Caco-2 (cell line): ENCODE measurements at regions of chr13 and their contacts with region 1.

Region 1: GRCh38 chr13:50244713-50245574 is 229.7 kb downstream of the KCNRG start:
- DNase-seq: peak; percentile 78 to 85
- H3K4me3 ChIP-seq: no peak overlapping the region
- H3K4me3 Mint-ChIP-seq: no peak overlapping the region
- H3K27ac Mint-ChIP-seq: peak overlapping the region; percentile 78
- H3K4me1 ChIP-seq: peaks cover 24% of the 10 kb centered on the region
- H3K4me1 Mint-ChIP-seq: peaks cover 34% of the 10 kb centered on the region
- H3K27me3 ChIP-seq: no peaks in the 10 kb centered on the region
- H3K27me3 Mint-ChIP-seq: no peaks in the 10 kb centered on the region
- CTCF ChIP-seq: no peak

Region 2: GRCh38 chr13:50156140-50156539 is 88.8 kb before region 1 on chr13:
- CTCF ChIA-PET with region 1: no interaction called
- POLR2A ChIA-PET with region 1: no interaction called
- intact Hi-C with region 1: no loop called
- DNase-seq: no peak
- H3K4me3 ChIP-seq: no peak overlapping the region
- H3K4me3 Mint-ChIP-seq: no peak overlapping the region
- H3K27ac Mint-ChIP-seq: no peak overlapping the region
- H3K4me1 ChIP-seq: peaks cover 5% of the 10 kb centered on the region; the same call in 1 of the 2 replicates
- H3K4me1 Mint-ChIP-seq: peaks cover 11% of the 10 kb centered on the region
- H3K27me3 ChIP-seq: no peaks in the 10 kb centered on the region
- H3K27me3 Mint-ChIP-seq: no peaks in the 10 kb centered on the region
- CTCF ChIP-seq: no peak

Region 3: DNA sequence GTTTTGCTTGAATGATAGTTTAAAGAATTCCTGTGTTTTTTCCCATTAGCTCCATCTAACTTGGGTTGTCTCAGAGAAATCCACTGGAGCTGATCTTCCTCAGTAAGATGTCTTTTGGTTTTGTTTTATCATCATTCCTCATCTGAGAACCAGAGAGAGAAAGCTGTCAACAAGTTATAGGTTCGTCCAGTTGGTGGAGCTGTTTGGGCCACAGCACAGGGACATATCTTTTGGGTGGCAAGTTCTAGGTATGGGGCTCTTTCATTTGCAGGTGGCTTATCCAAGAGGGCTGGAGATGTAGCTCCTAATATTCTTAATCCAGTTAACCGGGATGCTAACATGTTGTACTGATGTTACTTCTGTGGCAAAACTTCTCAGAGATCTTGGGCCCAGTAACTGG is 55.5 kb before region 1 on chr13:
- CTCF ChIA-PET with region 1: no interaction called
- POLR2A ChIA-PET with region 1: no interaction called
- intact Hi-C with region 1: loop called (anchors 5 kb)
- DNase-seq: no peak
- H3K4me3 ChIP-seq: no peak overlapping the region
- H3K4me3 Mint-ChIP-seq: no peak overlapping the region
- H3K27ac Mint-ChIP-seq: no peak overlapping the region
- H3K4me1 ChIP-seq: peaks cover 19% of the 10 kb centered on the region
- H3K4me1 Mint-ChIP-seq: peaks cover 7% of the 10 kb centered on the region
- H3K27me3 ChIP-seq: no peaks in the 10 kb centered on the region
- H3K27me3 Mint-ChIP-seq: no peaks in the 10 kb centered on the region
- CTCF ChIP-seq: no peak

Region 4: GRCh38 chr13:50229960-50230661 is 14.8 kb before region 1 on chr13:
- CTCF ChIA-PET with region 1: no interaction called
- POLR2A ChIA-PET with region 1: no interaction called
- intact Hi-C with region 1: loop called (anchors 1 kb)
- DNase-seq: peak in 1 of 2 experiments; percentile 12
- H3K4me3 ChIP-seq: no peak overlapping the region
- H3K4me3 Mint-ChIP-seq: no peak overlapping the region
- H3K27ac Mint-ChIP-seq: peak overlapping the region; percentile 34
- H3K4me1 ChIP-seq: peaks cover 16% of the 10 kb centered on the region
- H3K4me1 Mint-ChIP-seq: peaks cover 12% of the 10 kb centered on the region
- H3K27me3 ChIP-seq: no peaks in the 10 kb centered on the region
- H3K27me3 Mint-ChIP-seq: no peaks in the 10 kb centered on the region
- CTCF ChIP-seq: no peak

Region 5: DNA sequence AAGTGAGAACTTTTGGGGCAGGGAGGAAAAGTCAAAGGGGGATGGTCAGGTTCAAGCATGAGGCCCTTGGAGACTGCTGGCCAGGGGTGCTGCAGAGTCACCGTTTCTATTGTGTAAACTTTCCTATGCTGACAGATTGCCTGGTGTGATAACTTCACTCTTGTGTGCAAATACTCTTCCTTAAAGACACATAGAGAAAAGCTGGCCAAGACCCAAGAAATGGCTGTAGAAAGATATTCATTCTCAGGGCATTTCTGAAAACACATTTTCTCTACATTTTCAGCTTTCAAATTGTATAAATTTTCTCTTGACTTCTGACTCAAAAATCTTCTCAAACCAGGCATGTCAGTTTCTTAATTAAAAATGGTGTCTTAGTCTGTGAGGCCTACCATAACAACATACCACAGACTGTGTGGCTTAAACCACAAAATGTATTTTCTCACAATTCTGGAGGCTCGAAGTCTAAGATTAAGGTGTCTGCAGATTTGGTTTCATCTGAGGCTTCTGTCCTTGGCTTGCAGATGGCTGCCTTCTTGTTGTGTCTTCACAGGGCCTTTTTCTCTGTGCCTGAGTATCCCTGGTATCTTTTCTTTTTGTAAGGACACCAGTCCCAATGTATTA is 74.8 kb after region 1 on chr13:
- CTCF ChIA-PET with region 1: no interaction called
- POLR2A ChIA-PET with region 1: no interaction called
- intact Hi-C with region 1: loop called (anchors 2 kb)
- DNase-seq: no peak
- H3K4me3 ChIP-seq: no peak overlapping the region
- H3K4me3 Mint-ChIP-seq: peak overlapping the region; percentile 22
- H3K27ac Mint-ChIP-seq: peak overlapping the region; percentile 91
- H3K4me1 ChIP-seq: peaks cover 25% of the 10 kb centered on the region
- H3K4me1 Mint-ChIP-seq: peaks cover 25% of the 10 kb centered on the region
- H3K27me3 ChIP-seq: no peaks in the 10 kb centered on the region
- H3K27me3 Mint-ChIP-seq: no peaks in the 10 kb centered on the region
- CTCF ChIP-seq: no peak

Region 6: GRCh38 chr13:50410921-50411712 is 166.2 kb after region 1 on chr13:
- CTCF ChIA-PET with region 1: no interaction called
- POLR2A ChIA-PET with region 1: no interaction called
- intact Hi-C with region 1: loop called (anchors 1 kb)
- DNase-seq: peak; percentile 81 to 90
- H3K4me3 ChIP-seq: no peak overlapping the region
- H3K4me3 Mint-ChIP-seq: no peak overlapping the region
- H3K27ac Mint-ChIP-seq: peak overlapping the region; percentile 65
- H3K4me1 ChIP-seq: peaks cover 28% of the 10 kb centered on the region
- H3K4me1 Mint-ChIP-seq: peaks cover 17% of the 10 kb centered on the region
- H3K27me3 ChIP-seq: no peaks in the 10 kb centered on the region
- H3K27me3 Mint-ChIP-seq: no peaks in the 10 kb centered on the region
- CTCF ChIP-seq: no peak